Activated CD4-positive, alpha-beta T cell treated with anti-CD3 and anti-CD28 coated beads for 36 hours (primary cell): ENCODE measurements at regions of chr1 and their contacts with region 1.

Region 1: GRCh38 chr1:46442317-46443161 is 47.1 kb upstream of the DMBX1 start:
- DNase-seq: peak; percentile 84
- ATAC-seq: peak; percentile 80
- H3K4me3 Mint-ChIP-seq: peak overlapping the region; percentile 75
- H3K27ac Mint-ChIP-seq: peak overlapping the region; percentile 76
- H3K4me1 Mint-ChIP-seq: peaks cover 8% of the 10 kb centered on the region
- H3K27me3 Mint-ChIP-seq: peaks cover 11% of the 10 kb centered on the region

Region 2: GRCh38 chr1:46203738-46204405 is 238.7 kb before region 1 on chr1:
- CTCF ChIA-PET with region 1: no interaction called
- POLR2A ChIA-PET with region 1: no interaction called
- intact Hi-C with region 1: no loop called
- DNase-seq: no peak
- ATAC-seq: no peak
- H3K4me3 Mint-ChIP-seq: peak overlapping the region; percentile 70
- H3K27ac Mint-ChIP-seq: no peak overlapping the region
- H3K4me1 Mint-ChIP-seq: peaks cover 12% of the 10 kb centered on the region
- H3K27me3 Mint-ChIP-seq: peaks cover 2% of the 10 kb centered on the region

Region 3: GRCh38 chr1:46278807-46279206 is 163.7 kb before region 1 on chr1:
- CTCF ChIA-PET with region 1: no interaction called
- POLR2A ChIA-PET with region 1: no interaction called
- intact Hi-C with region 1: no loop called
- DNase-seq: no peak
- ATAC-seq: no peak
- H3K4me3 Mint-ChIP-seq: no peak overlapping the region
- H3K27ac Mint-ChIP-seq: no peak overlapping the region
- H3K4me1 Mint-ChIP-seq: no peaks in the 10 kb centered on the region
- H3K27me3 Mint-ChIP-seq: no peaks in the 10 kb centered on the region

Region 4: GRCh38 chr1:46431691-46432090 is 10.8 kb before region 1 on chr1:
- CTCF ChIA-PET with region 1: interaction called, 28 read pairs
- POLR2A ChIA-PET with region 1: no interaction called
- intact Hi-C with region 1: no loop called
- DNase-seq: no peak
- ATAC-seq: no peak
- H3K4me3 Mint-ChIP-seq: no peak overlapping the region
- H3K27ac Mint-ChIP-seq: no peak overlapping the region
- H3K4me1 Mint-ChIP-seq: no peaks in the 10 kb centered on the region
- H3K27me3 Mint-ChIP-seq: no peaks in the 10 kb centered on the region

Region 5: DNA sequence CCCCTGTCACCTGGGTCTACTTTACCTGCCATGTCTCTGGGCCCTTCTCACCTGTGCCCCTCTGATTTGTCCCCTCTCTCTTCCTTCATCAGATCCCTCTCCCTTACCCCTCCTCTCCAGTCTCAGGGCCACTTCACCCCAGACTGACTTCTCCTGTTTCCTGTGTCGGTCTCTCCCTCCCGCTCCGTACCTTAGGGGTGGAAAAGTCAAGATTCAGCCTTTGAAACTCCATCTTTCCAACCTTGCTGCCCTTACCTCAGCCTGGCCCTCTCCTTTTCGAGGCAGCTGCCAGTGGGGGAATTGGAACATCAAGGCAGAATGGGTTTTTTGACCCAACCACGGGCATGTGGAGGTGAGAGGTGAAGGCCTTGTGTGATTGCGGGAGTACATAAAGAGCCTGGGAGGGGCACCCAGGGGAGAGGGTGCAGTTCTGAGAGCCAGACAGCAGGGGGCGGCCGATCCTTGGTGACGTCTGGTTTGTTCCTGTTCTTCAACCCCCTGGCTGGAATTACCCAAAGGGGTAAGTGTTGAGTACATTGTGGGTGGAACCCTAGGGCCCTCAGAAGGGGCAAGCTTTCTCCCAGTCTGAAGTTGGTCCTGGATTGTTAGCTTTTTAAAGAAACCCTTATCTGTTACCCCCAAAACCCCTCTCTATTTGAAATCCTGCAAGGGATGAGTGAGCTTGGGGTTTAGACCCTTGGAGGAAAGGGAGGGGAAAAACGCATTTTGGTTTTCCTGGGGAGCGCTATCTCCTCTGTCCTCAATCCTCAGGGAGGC is 34.8 kb after region 1 on chr1:
- CTCF ChIA-PET with region 1: interaction called, 7 read pairs
- POLR2A ChIA-PET with region 1: no interaction called
- intact Hi-C with region 1: loop called (anchors 1 to 2 kb)
- DNase-seq: peak; percentile 89
- ATAC-seq: peak; percentile 98
- H3K4me3 Mint-ChIP-seq: no peak overlapping the region
- H3K27ac Mint-ChIP-seq: no peak overlapping the region
- H3K4me1 Mint-ChIP-seq: no peaks in the 10 kb centered on the region
- H3K27me3 Mint-ChIP-seq: peaks cover 24% of the 10 kb centered on the region

Region 6: DNA sequence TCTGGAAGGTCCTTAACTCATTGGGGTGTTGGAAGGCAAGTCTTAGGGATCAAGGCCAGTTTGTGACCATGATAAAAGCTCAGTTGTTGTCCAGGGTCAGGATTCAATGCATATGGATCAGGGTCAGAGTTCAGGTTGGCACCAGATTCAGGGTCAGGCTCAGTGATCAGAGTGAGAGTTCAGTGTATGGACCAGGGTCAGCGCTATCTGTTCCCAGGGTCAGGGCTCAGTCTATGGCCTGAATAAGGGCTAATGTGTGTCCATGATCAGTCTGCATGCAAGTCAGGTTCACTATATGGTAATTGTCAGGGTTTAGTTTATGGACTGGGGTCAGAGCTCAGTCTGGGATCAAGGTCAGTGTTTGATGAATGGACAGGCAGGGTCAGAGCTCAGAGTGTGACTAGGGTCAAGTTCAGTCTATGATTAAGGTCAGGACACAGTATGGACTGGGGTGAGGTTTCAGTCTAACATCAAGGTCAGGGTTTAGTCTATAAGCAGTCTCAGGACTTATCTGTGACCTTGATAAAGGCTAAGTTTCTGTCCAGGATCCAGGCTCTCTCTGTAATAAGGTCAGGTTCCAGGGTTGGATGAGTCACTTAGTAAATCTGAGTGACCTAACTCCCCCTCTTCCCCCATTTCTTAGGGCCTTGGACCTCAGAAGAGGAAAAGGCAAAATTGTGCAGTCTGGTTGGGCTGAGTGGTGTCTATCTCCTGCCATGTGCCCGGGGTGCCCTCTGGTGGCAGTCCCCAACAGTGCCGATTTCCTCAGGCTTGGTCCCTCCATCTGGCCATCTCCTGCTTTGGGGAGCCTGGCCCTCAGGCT is 85.1 kb after region 1 on chr1:
- CTCF ChIA-PET with region 1: interaction called, 105 read pairs
- POLR2A ChIA-PET with region 1: no interaction called
- intact Hi-C with region 1: loop called (anchors 1 kb)
- DNase-seq: peak; percentile 89
- ATAC-seq: peak; percentile 73
- H3K4me3 Mint-ChIP-seq: no peak overlapping the region
- H3K27ac Mint-ChIP-seq: no peak overlapping the region
- H3K4me1 Mint-ChIP-seq: peaks cover 17% of the 10 kb centered on the region
- H3K27me3 Mint-ChIP-seq: peaks cover 33% of the 10 kb centered on the region